ENCODE measurements at regions of chrX and their contacts with region 1.

Region 1: GRCh38 chrX:102950908-102951866 is 14.1 kb downstream of the RAB40AL start:
- H3K4me3 Mint-ChIP-seq: peak overlapping the region; percentile 72
- H3K27ac Mint-ChIP-seq: no peak overlapping the region
- H3K4me1 Mint-ChIP-seq: peaks cover 8% of the 10 kb centered on the region
- H3K27me3 Mint-ChIP-seq: no peaks in the 10 kb centered on the region

Region 2: DNA sequence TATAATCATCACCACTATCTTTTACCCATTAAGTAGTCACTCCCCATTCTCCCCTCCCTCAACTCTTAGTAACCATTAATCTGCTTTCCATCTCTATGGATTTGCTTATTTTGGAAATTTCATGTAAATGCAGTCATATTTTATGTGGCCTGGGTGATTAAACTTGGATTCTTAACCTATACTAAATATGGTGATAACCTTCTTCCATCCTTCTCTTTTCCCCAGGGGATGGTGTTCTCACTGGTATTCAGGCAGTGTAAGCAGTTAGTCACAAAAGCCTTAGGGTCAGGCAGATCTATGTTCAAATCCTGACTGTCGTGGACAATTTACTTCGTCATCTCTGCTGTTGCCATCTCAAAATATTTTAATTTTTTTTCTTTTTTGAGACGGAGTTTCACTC is 15.5 kb after region 1 on chrX:
- intact Hi-C with region 1: no loop called
- H3K4me3 Mint-ChIP-seq: no peak overlapping the region
- H3K27ac Mint-ChIP-seq: no peak overlapping the region
- H3K4me1 Mint-ChIP-seq: no peaks in the 10 kb centered on the region
- H3K27me3 Mint-ChIP-seq: no peaks in the 10 kb centered on the region

Region 3: DNA sequence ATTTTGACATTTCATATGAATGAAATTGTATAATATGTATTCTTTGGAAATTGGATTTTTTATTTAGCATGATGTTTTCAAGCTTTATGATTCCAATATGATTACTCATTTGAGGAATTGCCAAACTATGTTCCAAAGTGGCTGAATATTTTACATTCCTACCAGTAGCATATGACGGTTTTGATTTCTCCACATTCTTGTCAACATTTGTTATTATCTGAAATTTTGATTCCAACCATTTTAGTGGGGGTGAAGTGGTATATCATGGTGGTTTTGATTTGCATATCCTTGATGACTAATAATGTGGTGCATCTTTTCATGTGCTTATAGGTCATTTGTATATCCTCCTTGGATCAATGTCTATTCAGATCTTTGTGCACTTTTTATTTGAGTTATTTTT is 115.4 kb after region 1 on chrX:
- intact Hi-C with region 1: no loop called
- H3K4me3 Mint-ChIP-seq: no peak overlapping the region
- H3K27ac Mint-ChIP-seq: no peak overlapping the region
- H3K4me1 Mint-ChIP-seq: peaks cover 10% of the 10 kb centered on the region
- H3K27me3 Mint-ChIP-seq: peaks cover 23% of the 10 kb centered on the region

Region 4: DNA sequence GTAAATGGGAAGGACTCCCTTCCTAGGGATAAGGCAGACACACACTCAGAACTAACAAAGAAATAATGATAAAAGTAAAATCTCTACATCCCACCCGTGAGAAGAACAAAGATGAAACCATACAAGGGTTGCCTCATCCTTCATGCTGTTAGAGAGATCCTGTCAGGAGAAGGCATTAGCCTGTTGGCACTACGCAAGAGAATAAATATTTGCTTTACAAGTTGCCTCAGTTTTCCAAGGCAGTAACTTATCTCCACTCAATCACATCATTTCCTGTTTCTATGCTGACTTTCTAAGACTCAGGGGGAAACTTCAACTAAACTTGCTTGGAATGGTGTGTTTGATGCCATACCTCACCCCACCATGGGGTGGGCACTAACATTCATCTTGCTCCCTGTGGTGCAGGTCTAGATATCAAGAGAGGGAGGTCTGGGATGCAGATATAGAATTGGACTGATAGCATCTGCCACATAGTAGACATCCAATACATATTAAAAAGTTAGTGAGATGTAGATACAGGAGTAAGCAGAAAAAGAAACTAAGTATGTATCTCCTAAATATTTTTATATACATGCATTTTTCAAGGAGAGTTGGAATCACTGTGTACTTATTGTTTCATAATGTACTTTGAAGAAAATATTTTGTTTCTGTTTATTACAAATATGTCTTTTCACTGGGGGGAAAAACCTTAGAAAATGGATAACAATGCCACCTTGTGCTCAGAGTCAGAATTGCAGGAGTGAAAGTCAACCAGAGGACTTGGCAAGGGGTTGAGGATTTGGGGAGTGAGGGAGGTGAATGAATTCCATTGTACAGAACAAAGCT is 206.5 kb after region 1 on chrX:
- intact Hi-C with region 1: loop called (anchors 1 kb)
- H3K4me3 Mint-ChIP-seq: no peak overlapping the region
- H3K27ac Mint-ChIP-seq: no peak overlapping the region
- H3K4me1 Mint-ChIP-seq: peaks cover 12% of the 10 kb centered on the region
- H3K27me3 Mint-ChIP-seq: no peaks in the 10 kb centered on the region

Region 5: GRCh38 chrX:103175944-103176753 is 225.0 kb after region 1 on chrX:
- intact Hi-C with region 1: loop called (anchors 1 kb)
- H3K4me3 Mint-ChIP-seq: no peak overlapping the region
- H3K27ac Mint-ChIP-seq: no peak overlapping the region
- H3K4me1 Mint-ChIP-seq: peaks cover 5% of the 10 kb centered on the region
- H3K27me3 Mint-ChIP-seq: no peaks in the 10 kb centered on the region

Region 6: DNA sequence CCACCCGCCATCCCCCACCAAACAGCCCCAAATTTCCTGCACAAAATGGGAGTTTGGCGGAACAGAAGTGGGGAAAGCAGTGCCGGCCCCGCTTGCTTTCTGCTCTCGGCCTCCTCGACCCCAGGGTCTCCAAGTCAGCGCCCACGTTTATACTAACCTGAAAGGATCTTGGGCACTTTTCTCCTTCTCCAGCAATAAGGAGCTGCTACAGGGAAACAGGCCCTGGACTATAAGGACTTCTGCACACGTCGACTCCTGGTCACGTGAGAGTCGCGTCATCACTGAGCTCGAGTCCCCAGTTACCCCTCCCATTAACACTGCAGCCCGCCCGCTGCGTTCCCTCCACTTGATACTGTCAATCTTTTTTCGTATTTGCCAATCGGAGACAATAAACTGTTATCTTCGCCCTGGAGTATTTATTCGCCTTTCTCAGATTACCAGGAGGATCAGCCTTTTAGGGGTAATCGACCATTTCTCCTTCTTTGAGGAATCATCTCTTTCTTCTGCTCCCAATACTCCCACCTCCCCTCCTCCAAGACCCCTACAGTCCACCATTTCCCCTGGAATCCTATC is 303.8 kb after region 1 on chrX and contains the start of gene TCEAL8:
- intact Hi-C with region 1: loop called (anchors 10 kb)
- H3K4me3 Mint-ChIP-seq: peak within 1 kb of the TSS; percentile 97
- H3K27ac Mint-ChIP-seq: peak within 1 kb of the TSS; percentile 90
- H3K4me1 Mint-ChIP-seq: peaks cover 24% of the 10 kb centered on the region
- H3K27me3 Mint-ChIP-seq: no peaks in the 10 kb centered on the region

Measured in dendritic cell treated with granulocyte-macrophage colony-stimulating factor and Interleukin-4, amounts not matched to agents 40 ng/mL and 50 ng/mL, for 4 days (primary cell).